ENCODE measurements at regions of chr11 and their contacts with region 1.

Region 1: GRCh38 chr11:65711785-65712632 is at the start of gene KAT5:
- DNase-seq: peak; percentile 96 to 99
- H3K4me3 ChIP-seq: peak within 1 kb of the TSS; percentile 86
- H3K27ac ChIP-seq: peak within 1 kb of the TSS; percentile 91
- H3K4me1 ChIP-seq: peaks cover 13% of the 10 kb centered on the region
- H3K27me3 ChIP-seq: no peaks in the 10 kb centered on the region
- CTCF ChIP-seq: peak; percentile 97
- total RNA-seq, gene KAT5: 49.6 and 57.1 TPM in 2 replicates

Region 2: GRCh38 chr11:65551572-65552398 is 160.2 kb before region 1 on chr11:
- CTCF ChIA-PET with region 1: no interaction called
- POLR2A ChIA-PET with region 1: no interaction called
- intact Hi-C with region 1: no loop called
- DNase-seq: peak; percentile 63 to 75
- H3K4me3 ChIP-seq: no peak overlapping the region
- H3K27ac ChIP-seq: no peak overlapping the region
- H3K4me1 ChIP-seq: peaks cover 41% of the 10 kb centered on the region
- H3K27me3 ChIP-seq: no peaks in the 10 kb centered on the region
- CTCF ChIP-seq: peak; percentile 70

Region 3: GRCh38 chr11:65563601-65564000 is 148.4 kb before region 1 on chr11:
- CTCF ChIA-PET with region 1: no interaction called
- POLR2A ChIA-PET with region 1: no interaction called
- intact Hi-C with region 1: no loop called
- DNase-seq: no peak
- H3K4me3 ChIP-seq: no peak overlapping the region
- H3K27ac ChIP-seq: no peak overlapping the region
- H3K4me1 ChIP-seq: peaks cover 54% of the 10 kb centered on the region
- H3K27me3 ChIP-seq: no peaks in the 10 kb centered on the region
- CTCF ChIP-seq: no peak

Region 4: GRCh38 chr11:65662799-65663638 is 49.0 kb before region 1 on chr11 and contains the start of gene RELA:
- CTCF ChIA-PET with region 1: no interaction called
- POLR2A ChIA-PET with region 1: interaction called, 13 read pairs
- intact Hi-C with region 1: no loop called
- DNase-seq: peak; percentile 76 to 98
- H3K4me3 ChIP-seq: peak within 1 kb of the TSS; percentile 99
- H3K27ac ChIP-seq: peak within 1 kb of the TSS; percentile 80
- H3K4me1 ChIP-seq: peaks cover 20% of the 10 kb centered on the region
- H3K27me3 ChIP-seq: no peaks in the 10 kb centered on the region
- CTCF ChIP-seq: no peak
- total RNA-seq, gene RELA: 59.5 and 86.8 TPM in 2 replicates

Region 5: DNA sequence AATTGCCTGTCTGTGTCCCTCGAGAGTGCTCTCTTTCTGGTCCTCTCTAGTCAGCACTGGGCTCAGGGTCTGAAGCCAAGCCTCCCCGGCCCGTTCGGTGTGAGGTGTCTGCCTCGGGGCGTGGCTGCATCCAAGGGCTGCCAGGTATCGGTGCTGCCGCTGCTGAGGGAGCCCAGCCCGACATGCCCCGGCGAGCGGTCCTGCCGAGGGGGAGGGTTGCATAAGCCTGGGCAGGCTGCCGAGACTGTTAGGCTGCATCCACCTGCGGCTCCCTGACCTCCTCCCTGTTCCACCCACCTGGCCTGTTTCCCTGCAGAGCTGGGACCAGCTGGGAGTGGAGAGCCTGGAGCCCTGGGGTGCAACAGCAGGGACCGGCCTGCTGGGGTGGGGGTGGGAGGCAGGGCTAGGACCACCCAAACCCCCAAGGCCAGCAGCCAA is 81.2 kb after region 1 on chr11:
- CTCF ChIA-PET with region 1: interaction called, 13 read pairs
- POLR2A ChIA-PET with region 1: interaction called, 3 read pairs
- intact Hi-C with region 1: no loop called
- DNase-seq: peak; percentile 76 to 91
- H3K4me3 ChIP-seq: peak overlapping the region; percentile 33; the same call in 1 of the 2 replicates
- H3K27ac ChIP-seq: peak overlapping the region; percentile 89
- H3K4me1 ChIP-seq: peaks cover 62% of the 10 kb centered on the region
- H3K27me3 ChIP-seq: no peaks in the 10 kb centered on the region
- CTCF ChIP-seq: no peak

Region 6: DNA sequence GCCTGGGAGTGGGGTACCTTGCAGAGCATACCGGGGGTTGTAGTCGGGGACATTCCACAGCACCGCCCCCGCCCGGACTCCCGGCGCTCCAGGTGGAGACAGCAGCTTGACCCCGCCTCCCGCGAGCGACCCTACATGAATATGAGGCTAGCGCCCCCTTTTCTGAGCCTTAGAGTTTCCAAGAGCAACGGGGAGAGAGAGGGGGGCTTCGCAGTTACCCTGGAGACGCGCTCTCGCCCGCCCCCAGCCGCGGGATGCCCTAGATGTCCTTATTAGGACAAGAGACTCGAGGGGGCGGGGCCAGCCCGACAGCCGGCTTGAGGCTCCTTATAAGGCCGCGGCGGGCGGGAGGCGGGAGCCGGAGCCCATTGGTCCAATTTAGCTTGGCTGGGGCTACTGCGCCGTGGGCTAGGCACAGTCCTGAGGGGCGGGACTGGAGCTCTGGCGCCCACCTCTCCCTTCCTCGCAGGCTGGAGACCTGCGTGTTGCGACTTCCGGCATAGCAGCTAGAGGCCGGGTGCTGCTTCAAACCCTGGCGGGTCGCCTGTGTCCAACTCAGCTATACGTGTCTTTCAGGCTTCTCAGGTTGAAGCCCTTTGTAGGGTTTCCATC is 147.3 kb after region 1 on chr11:
- CTCF ChIA-PET with region 1: interaction called, 24 read pairs
- POLR2A ChIA-PET with region 1: interaction called, 37 read pairs
- intact Hi-C with region 1: loop called (anchors 1 kb)
- DNase-seq: peak; percentile 96 to 99
- H3K4me3 ChIP-seq: peak overlapping the region; percentile 96
- H3K27ac ChIP-seq: peak overlapping the region; percentile 79
- H3K4me1 ChIP-seq: peaks cover 21% of the 10 kb centered on the region
- H3K27me3 ChIP-seq: no peaks in the 10 kb centered on the region
- CTCF ChIP-seq: peak; percentile 38; the same call in 1 of the 2 replicates

Region 7: DNA sequence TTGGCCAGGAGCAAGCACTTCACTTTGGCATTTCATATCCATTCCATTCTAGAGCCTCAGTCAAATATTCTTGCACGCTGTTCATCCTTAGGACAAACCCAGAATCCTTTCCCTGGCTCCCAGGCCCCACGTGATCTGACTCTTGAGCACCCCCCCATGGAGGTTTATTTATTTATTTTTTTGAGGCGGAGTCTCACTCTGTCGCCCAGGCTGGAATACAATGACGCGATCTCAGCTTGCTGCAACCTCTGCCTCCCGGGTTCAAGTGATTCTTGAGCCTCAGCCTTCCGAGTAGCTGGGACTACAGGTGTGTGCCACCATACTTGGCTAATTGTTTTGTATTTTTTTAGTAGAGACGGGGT is 220.5 kb after region 1 on chr11:
- CTCF ChIA-PET with region 1: no interaction called
- POLR2A ChIA-PET with region 1: interaction called, 21 read pairs
- intact Hi-C with region 1: no loop called
- DNase-seq: no peak
- H3K4me3 ChIP-seq: no peak overlapping the region
- H3K27ac ChIP-seq: no peak overlapping the region
- H3K4me1 ChIP-seq: no peaks in the 10 kb centered on the region
- H3K27me3 ChIP-seq: no peaks in the 10 kb centered on the region
- CTCF ChIP-seq: no peak; the same call in 1 of the 2 replicates

Region 8: GRCh38 chr11:65988791-65989592 is 277.0 kb after region 1 on chr11:
- CTCF ChIA-PET with region 1: no interaction called
- POLR2A ChIA-PET with region 1: no interaction called
- intact Hi-C with region 1: loop called (anchors 1 kb)
- DNase-seq: peak; percentile 87 to 92
- H3K4me3 ChIP-seq: no peak overlapping the region
- H3K27ac ChIP-seq: no peak overlapping the region
- H3K4me1 ChIP-seq: peaks cover 4% of the 10 kb centered on the region; the same call in 1 of the 2 replicates
- H3K27me3 ChIP-seq: no peaks in the 10 kb centered on the region
- CTCF ChIP-seq: peak; percentile 99

Measured in PC-9 (cell line).